ENCODE measurements at regions of chr2 and their contacts with region 1.

Region 1: DNA sequence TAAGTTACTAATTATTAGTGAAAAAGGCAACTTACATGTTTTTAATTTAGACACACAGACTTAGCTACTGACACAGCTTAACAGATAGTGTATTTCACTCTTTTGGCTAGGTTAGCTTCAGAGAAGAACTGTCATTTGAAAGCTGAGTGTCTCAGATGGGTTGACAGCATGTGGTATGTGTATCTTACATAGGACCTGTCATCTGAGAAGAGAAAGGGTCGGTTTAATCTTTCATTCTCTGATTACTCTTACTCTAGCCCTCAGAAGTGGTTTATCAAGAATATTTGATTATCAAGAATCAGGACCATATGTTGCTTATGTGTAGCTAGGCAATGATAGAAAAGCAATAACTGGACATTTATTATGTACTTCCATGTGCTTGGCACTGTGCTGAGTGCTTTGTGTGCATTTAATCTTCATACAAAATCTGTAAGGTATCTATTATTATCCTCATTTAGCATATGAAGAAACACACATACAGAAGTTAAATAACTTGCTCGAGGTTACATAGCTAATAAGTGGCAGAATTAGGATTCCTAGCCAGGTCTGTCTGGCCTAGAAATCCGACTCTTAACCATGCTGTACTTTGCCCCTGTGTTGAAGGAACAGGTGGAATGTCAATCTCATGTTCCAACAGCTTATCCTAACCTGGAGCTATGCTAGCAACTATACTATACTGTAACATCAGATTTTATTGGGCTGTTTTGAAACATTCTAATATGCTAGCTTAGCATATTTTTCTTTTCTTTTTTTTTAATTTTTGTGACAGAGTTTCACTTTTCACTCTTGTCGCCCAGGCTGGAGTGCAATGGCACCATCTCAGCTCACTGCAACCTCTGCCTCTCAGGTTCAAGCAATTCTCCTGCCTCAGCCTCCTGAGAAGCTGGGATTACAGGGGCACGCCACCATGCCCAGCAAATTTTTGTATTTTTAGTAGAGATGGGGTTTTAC is 28.4 kb downstream of the CFLAR start:
- DNase-seq: no peak
- ATAC-seq: no peak
- H3K4me3 ChIP-seq: no peak overlapping the region
- H3K4me3 Mint-ChIP-seq: no peak overlapping the region
- H3K27ac ChIP-seq: no peak overlapping the region
- H3K27ac Mint-ChIP-seq: peak overlapping the region in 4 of 9 donors; percentile 8 to 56 (median 18)
- H3K4me1 ChIP-seq: no peaks in the 10 kb centered on the region
- H3K4me1 Mint-ChIP-seq: peaks cover 0 to 24% (median 8%) of the 10 kb centered on the region in 7 donors
- H3K27me3 ChIP-seq: no peaks in the 10 kb centered on the region
- H3K27me3 Mint-ChIP-seq: no peaks in the 10 kb centered on the region

Region 2: DNA sequence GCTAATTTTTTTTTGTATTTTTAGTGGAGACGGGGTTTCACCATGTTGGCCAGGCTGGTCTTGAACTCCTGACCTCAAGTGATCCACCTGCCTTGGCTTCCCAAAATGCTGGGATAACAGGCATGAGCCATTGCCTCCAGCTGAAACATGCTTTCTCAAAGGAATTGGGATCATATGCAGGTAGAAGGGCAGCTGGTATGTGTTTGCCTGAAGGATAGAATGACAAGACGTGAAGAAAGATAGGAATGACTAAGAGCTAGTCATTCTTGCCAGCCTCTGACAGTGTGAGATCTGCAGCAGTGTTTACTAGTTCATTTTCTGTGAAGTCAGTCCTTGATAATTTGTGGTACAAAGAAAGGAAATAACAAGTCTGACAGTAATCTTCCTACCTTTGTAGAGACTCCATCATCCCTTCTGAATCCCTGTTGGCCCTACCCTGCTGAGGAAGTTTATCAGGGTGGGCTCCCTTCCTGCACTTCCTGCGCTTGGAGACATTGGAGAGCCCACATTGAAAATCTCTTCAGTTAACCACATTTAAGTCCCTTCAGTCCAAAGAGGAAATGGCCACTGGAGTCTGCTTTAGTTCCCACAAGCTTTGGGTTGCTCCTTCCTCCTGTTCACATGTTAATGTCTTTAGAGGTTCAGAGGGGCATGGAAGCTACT is 13.7 kb before region 1 on chr2:
- CTCF ChIA-PET with region 1: interaction called, 5 read pairs
- POLR2A ChIA-PET with region 1: interaction called, 10 read pairs
- intact Hi-C with region 1: loop called in 1 of 2 experiments (anchors 2 kb)
- DNase-seq: peak in 7 of 9 donors; percentile 37 to 59 (median 53)
- ATAC-seq: peak; percentile 71
- H3K4me3 ChIP-seq: peak overlapping the region; percentile 28
- H3K4me3 Mint-ChIP-seq: peak overlapping the region; percentile 54 to 88 (median 72)
- H3K27ac ChIP-seq: peak overlapping the region; percentile 27
- H3K27ac Mint-ChIP-seq: peak overlapping the region; percentile 89 to 98 (median 96)
- H3K4me1 ChIP-seq: peaks cover 57 to 63% of the 10 kb centered on the region in 2 donors
- H3K4me1 Mint-ChIP-seq: peaks cover 61 to 80% (median 76%) of the 10 kb centered on the region in 7 donors
- H3K27me3 ChIP-seq: no peaks in the 10 kb centered on the region
- H3K27me3 Mint-ChIP-seq: no peaks in the 10 kb centered on the region

Region 3: DNA sequence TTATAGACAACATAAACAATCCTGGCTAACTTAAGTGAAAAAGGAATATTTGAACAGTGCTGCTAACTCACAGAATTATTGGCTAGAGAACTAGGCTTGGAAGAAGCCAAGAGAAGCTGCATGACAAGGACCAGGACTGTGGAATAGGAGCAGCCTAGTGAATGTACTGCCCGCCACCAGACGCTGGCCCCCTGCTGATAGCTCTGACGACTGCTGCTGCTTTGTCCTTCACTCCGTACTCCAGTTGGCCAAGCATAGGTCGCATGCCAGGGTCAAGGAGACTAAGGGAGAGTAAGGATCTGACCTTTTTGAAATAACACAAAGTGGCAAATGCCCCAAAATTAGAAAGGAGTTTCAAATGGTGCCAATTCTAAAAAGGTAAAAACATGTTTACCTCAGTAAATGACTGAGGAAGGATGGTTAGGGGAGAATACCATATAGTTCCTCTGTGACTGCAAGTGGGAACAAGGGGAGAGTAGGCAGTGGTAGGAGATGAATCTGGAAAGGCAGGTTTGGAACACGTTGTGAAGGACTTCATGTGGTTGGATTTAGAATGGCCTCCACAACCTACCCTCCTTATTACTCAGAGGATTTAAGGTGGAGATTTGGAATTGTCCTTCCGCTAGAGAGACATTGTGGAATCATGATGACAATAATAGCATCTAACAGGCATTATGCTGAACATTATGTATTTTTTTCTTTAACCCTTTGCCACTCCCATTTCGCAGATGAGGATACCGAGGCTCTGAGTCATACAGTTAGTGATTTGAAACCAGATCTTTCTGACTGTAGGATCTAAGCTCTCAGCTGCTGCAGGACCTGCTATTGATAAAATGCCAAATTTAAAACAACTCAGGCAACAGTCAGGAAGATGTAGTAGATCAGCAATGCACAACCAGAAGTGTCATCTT is 326.7 kb after region 1 on chr2:
- CTCF ChIA-PET with region 1: no interaction called
- POLR2A ChIA-PET with region 1: no interaction called
- intact Hi-C with region 1: no loop called
- DNase-seq: no peak
- ATAC-seq: no peak
- H3K4me3 ChIP-seq: no peak overlapping the region
- H3K4me3 Mint-ChIP-seq: no peak overlapping the region
- H3K27ac ChIP-seq: no peak overlapping the region
- H3K27ac Mint-ChIP-seq: no peak overlapping the region
- H3K4me1 ChIP-seq: no peaks in the 10 kb centered on the region
- H3K4me1 Mint-ChIP-seq: peaks cover 0 to 8% (median 0%) of the 10 kb centered on the region in 7 donors
- H3K27me3 ChIP-seq: no peaks in the 10 kb centered on the region
- H3K27me3 Mint-ChIP-seq: no peaks in the 10 kb centered on the region

Measured in naive thymus-derived CD4-positive, alpha-beta T cell (primary cell).